ENCODE measurements at regions of chr6 and their contacts with region 1.

Region 1: DNA sequence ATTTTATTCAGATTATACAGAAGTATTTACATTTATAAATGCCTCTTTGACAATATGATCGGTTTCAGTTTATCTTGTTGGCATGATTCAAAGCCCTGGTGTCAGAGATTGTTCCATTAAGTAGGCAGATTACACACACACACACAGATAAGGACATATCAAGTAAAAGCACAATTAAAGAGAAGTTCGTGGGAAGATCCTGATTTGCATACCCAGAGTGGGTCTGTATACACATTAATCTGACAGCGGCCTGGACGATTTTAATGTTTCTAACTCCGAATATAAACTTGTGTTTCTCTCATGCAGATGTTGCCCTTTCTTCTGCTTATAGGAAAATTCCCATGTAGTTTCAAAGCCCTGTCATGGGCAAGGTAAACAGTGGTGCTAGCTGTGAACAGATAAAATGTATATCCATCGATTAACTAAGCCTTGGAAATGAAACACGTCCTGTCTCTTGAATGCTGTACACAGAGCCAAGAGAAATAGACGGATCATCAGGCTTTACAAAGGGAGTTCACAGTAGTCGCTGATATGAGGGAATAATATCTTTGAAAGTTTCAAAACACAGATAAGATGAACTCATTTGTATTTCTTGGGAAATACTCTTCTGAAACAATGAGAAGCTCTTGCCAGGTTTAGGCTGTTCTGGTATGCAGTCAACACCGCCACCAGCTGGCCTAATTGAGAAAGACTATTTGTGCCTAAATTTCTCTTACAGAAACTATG is 108.2 kb upstream of the GMDS start:
- DNase-seq: peak; percentile 58
- H3K4me3 ChIP-seq: no peak overlapping the region; a peak in 1 of 4 replicates
- H3K27ac ChIP-seq: no peak overlapping the region
- H3K4me1 ChIP-seq: no peaks in the 10 kb centered on the region
- H3K27me3 ChIP-seq: no peaks in the 10 kb centered on the region
- CTCF ChIP-seq: peak; percentile 93
- EP300 ChIP-seq: no peak
- RAD21 ChIP-seq: peak; percentile 92

Region 2: DNA sequence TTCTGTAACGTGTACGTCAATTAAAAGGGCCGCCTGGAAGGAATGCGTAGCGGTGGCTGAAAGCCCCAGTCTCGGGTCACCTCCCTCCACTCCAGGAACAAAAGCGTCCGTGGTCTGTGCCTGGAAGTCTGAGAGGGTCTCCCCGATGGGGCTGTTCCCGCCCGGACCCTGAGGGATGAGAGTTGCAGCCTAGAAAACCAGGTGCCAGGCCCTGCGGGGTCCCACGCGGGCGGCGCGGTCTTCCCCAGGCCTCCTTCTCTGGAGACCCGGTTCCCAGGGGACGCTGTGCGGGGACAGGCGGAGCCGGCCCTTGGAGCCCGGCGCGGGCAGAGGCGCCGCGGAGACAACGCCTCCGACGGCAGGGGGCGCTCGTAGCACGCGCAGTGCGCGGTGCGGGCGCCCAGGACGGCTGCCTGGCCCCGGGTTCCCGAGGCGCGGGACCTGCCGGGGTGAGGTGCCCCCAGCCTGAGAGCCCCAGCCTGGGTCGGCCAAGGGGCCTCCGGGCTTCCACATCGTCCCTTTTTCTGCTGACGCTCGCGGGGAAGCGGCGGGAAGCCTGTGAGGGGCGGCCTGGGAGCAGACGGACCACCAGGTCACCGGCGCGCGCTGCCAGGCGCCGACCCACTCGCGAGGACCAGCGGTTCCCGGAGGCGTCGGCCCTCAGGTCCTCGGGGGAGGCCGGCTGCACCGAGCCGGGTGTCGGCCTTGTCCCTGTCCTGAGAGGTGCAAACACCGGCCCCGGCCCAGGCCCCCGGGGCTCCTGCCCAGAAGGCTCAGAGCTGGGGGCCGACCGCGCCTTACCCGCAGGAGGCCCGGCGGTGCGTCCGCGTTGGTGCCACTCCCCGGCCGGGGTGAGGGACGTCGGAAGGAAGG is 749.2 kb before region 1 on chr6:
- CTCF ChIA-PET with region 1: interaction called, 95 read pairs
- POLR2A ChIA-PET with region 1: no interaction called
- DNase-seq: peak; percentile 94
- H3K4me3 ChIP-seq: peak overlapping the region; percentile 40 to 51
- H3K27ac ChIP-seq: no peak overlapping the region
- H3K4me1 ChIP-seq: peaks cover 0 to 11% of the 10 kb centered on the region in 2 experiments; a peak in 1 of 4 replicates
- H3K27me3 ChIP-seq: no peaks in the 10 kb centered on the region
- CTCF ChIP-seq: peak; percentile 80
- EP300 ChIP-seq: no peak
- RAD21 ChIP-seq: peak; percentile 92

Region 3: GRCh38 chr6:1609648-1610496 is 743.7 kb before region 1 on chr6 and contains the start of gene FOXC1:
- CTCF ChIA-PET with region 1: interaction called, 21 read pairs
- POLR2A ChIA-PET with region 1: no interaction called
- DNase-seq: peak; percentile 97
- H3K4me3 ChIP-seq: peak within 1 kb of the TSS; percentile 70 to 79
- H3K27ac ChIP-seq: peak within 1 kb of the TSS; percentile 72 to 90
- H3K4me1 ChIP-seq: peaks cover 0 to 6% of the 10 kb centered on the region in 2 experiments; a peak in 1 of 4 replicates
- H3K27me3 ChIP-seq: no peaks in the 10 kb centered on the region
- CTCF ChIP-seq: no peak
- EP300 ChIP-seq: no peak
- RAD21 ChIP-seq: no peak
- polyA plus RNA-seq, gene FOXC1: 3.6 and 4.3 TPM in 2 replicates

Region 4: DNA sequence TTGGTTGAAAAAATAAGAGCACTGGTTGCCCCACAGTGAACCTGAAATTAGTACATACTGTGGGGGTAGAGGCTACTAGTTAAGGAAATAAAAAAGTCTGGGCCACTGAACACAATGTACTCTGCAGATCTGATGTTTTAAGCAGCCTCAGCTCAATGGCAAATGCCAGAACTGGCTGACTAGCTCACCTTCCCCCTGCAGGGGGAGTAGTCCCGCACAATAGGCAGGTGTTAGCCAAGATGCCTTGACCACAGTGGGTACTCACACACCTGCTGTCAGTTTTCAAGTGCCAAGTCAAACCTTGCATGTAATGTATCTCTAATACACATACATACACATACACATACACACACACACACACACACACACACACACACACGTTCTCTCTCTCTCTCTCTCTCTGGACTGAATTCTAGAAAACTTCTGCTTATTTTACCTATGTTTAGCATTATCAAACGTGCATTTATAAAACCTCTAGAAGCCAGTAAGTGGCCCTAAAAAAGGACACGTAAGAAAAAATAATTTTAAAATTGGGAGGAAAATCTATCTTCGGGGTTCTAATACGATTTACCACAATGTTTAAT is 144.3 kb before region 1 on chr6:
- CTCF ChIA-PET with region 1: interaction called, 29 read pairs
- POLR2A ChIA-PET with region 1: no interaction called
- DNase-seq: peak; percentile 40
- H3K4me3 ChIP-seq: no peak overlapping the region
- H3K27ac ChIP-seq: no peak overlapping the region
- H3K4me1 ChIP-seq: no peaks in the 10 kb centered on the region
- H3K27me3 ChIP-seq: no peaks in the 10 kb centered on the region
- CTCF ChIP-seq: peak; percentile 56
- EP300 ChIP-seq: no peak
- RAD21 ChIP-seq: peak; percentile 56

Region 5: DNA sequence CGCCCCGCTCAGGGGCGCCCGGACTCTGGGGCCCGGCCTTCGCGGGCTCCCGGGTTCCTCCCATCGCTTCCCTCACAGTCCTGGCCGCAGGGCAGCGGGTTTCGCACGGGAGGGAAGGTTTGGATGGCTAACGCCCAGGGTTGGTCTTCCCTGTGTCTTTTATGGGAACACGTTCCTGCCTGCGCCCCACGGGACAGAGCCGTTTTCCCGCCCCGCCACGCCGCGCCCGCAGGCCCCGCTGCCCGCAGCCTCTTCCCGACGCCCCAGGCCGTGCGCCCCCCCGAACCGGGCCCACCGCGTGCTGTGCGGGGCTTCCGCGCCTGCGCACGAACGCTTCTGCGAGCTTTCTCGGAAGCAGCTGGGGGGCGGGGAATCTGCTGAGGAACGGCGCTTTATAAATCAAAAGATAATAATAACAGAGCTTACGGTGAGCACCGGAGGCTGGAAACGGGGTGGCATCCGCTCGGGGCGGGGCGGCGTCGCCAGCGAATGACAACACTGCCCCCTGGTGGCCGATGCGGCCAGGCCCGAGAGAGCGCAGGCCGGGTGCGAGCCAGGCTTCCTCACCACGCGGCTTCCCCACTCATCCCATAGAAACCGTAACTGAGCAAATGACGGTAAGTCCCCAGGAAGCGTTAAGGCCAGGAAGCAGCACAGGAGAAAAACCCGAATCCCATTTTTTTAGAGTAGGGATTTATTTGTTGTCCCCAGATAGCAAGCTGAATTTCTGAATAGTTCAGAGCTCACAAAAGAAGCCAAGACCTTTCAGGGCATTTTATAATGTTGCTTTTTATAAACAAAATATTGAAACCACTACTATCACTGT is 280.8 kb after region 1 on chr6:
- CTCF ChIA-PET with region 1: interaction called, 17 read pairs
- POLR2A ChIA-PET with region 1: no interaction called
- DNase-seq: peak; percentile 93
- H3K4me3 ChIP-seq: peak overlapping the region; percentile 49 to 68
- H3K27ac ChIP-seq: no peak overlapping the region
- H3K4me1 ChIP-seq: peaks cover 6 to 11% of the 10 kb centered on the region in 2 experiments; a peak in 2 of 4 replicates
- H3K27me3 ChIP-seq: no peaks in the 10 kb centered on the region; the same call in 1 of the 2 replicates
- CTCF ChIP-seq: peak; percentile 97
- EP300 ChIP-seq: no peak
- RAD21 ChIP-seq: peak; percentile 81

Measured in SK-N-SH (cell line).